B cell (primary cell): ENCODE measurements at regions of chr2 and their contacts with region 1.

Region 1: GRCh38 chr2:230893841-230894781 is 29.4 kb downstream of the ITM2C start:
- DNase-seq: peak; percentile 77
- ATAC-seq: peak; percentile 88
- H3K4me3 ChIP-seq: peak overlapping the region in 1 of 5 experiments; percentile 1
- H3K4me3 Mint-ChIP-seq: peak overlapping the region; percentile 30
- H3K27ac ChIP-seq: peak overlapping the region; percentile 53 to 70
- H3K27ac Mint-ChIP-seq: peak overlapping the region; percentile 48
- H3K4me1 ChIP-seq: peaks cover 44 to 66% of the 10 kb centered on the region in 2 donors
- H3K4me1 Mint-ChIP-seq: peaks cover 53% of the 10 kb centered on the region
- H3K27me3 ChIP-seq: no peaks in the 10 kb centered on the region
- H3K27me3 Mint-ChIP-seq: no peaks in the 10 kb centered on the region
- CTCF ChIP-seq: no peak

Region 2: GRCh38 chr2:230873476-230874451 is 20.3 kb before region 1 on chr2:
- CTCF ChIA-PET with region 1: interaction called, 4 read pairs
- POLR2A ChIA-PET with region 1: interaction called, 3 read pairs
- intact Hi-C with region 1: loop called (anchors 2 kb)
- DNase-seq: peak; percentile 88
- ATAC-seq: peak; percentile 77
- H3K4me3 ChIP-seq: peak overlapping the region in 4 of 5 experiments; percentile 33 to 57 (median 40)
- H3K4me3 Mint-ChIP-seq: peak overlapping the region; percentile 80
- H3K27ac ChIP-seq: peak overlapping the region; percentile 90 to 99
- H3K27ac Mint-ChIP-seq: peak overlapping the region; percentile 87
- H3K4me1 ChIP-seq: peaks cover 92 to 95% of the 10 kb centered on the region in 2 donors
- H3K4me1 Mint-ChIP-seq: peaks cover 72% of the 10 kb centered on the region
- H3K27me3 ChIP-seq: no peaks in the 10 kb centered on the region
- H3K27me3 Mint-ChIP-seq: no peaks in the 10 kb centered on the region
- CTCF ChIP-seq: no peak

Region 3: GRCh38 chr2:230932556-230933511 is 38.7 kb after region 1 on chr2:
- CTCF ChIA-PET with region 1: no interaction called
- POLR2A ChIA-PET with region 1: no interaction called
- intact Hi-C with region 1: no loop called
- DNase-seq: no peak
- ATAC-seq: no peak
- H3K4me3 ChIP-seq: no peak overlapping the region
- H3K4me3 Mint-ChIP-seq: no peak overlapping the region
- H3K27ac ChIP-seq: no peak overlapping the region
- H3K27ac Mint-ChIP-seq: no peak overlapping the region
- H3K4me1 ChIP-seq: no peaks in the 10 kb centered on the region
- H3K4me1 Mint-ChIP-seq: no peaks in the 10 kb centered on the region
- H3K27me3 ChIP-seq: peaks cover 0 to 11% (median 0%) of the 10 kb centered on the region in 4 experiments
- H3K27me3 Mint-ChIP-seq: peaks cover 4% of the 10 kb centered on the region
- CTCF ChIP-seq: no peak